Naive thymus-derived CD4-positive, alpha-beta T cell (primary cell): ENCODE measurements at regions of chr9 and their contacts with region 1.

Region 1: DNA sequence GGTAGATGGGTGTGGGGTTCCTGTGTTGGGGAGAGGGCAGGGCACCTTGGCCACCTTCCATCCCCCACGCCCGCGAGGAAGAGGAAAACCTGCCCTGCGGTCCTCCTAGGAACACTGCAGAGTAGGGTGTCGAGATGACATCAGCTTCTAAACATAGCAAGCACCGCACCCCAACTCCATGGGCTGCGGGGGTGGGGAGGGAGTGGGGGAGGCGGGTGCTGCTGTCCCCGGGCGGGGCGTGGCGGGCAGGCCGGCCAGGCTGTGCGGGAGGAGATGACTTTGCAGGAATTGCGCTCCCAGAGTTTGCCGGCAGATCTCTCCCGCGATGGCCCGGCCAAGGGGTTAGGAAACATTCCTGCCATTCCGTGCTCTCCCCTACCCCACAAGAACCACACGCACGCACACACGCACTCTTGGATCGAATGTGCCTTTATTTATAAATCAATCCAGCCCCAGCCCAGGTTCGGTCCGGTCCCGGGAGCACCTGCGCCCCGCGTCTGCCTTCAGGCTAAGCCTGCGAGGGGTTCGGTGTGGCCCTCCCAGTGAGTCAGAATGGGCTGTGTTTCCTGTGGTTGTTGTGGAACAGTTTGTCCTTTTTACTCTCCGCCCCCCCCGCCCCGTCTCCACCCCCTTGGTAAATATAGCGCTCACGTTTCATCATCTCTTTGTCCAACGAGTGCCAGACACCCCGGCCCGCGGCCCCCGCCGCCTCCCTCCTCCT is 5.2 kb upstream of the KLF9 start:
- DNase-seq: peak; percentile 69 to 92 (median 83)
- ATAC-seq: peak; percentile 69
- H3K4me3 ChIP-seq: peak overlapping the region; percentile 69
- H3K4me3 Mint-ChIP-seq: peak overlapping the region; percentile 87 to 99 (median 95)
- H3K27ac ChIP-seq: peak overlapping the region; percentile 92
- H3K27ac Mint-ChIP-seq: peak overlapping the region; percentile 75 to 100 (median 99)
- H3K4me1 ChIP-seq: peaks cover 38 to 43% of the 10 kb centered on the region in 2 donors
- H3K4me1 Mint-ChIP-seq: peaks cover 22 to 66% (median 42%) of the 10 kb centered on the region in 7 donors
- H3K27me3 ChIP-seq: no peaks in the 10 kb centered on the region
- H3K27me3 Mint-ChIP-seq: peaks cover 0 to 2% (median 0%) of the 10 kb centered on the region in 5 donors

Region 2: GRCh38 chr9:70398145-70398556 is 21.6 kb before region 1 on chr9:
- CTCF ChIA-PET with region 1: interaction called, 3 read pairs
- POLR2A ChIA-PET with region 1: interaction called, 138 read pairs
- intact Hi-C with region 1: loop called in 1 of 2 experiments (anchors 1 kb)
- DNase-seq: peak in 6 of 9 donors; percentile 45 to 69 (median 56)
- ATAC-seq: peak; percentile 95
- H3K4me3 ChIP-seq: peak overlapping the region; percentile 3
- H3K4me3 Mint-ChIP-seq: peak overlapping the region; percentile 13 to 85 (median 74)
- H3K27ac ChIP-seq: peak overlapping the region; percentile 50
- H3K27ac Mint-ChIP-seq: peak overlapping the region; percentile 49 to 91 (median 84)
- H3K4me1 ChIP-seq: peaks cover 40 to 68% of the 10 kb centered on the region in 2 donors
- H3K4me1 Mint-ChIP-seq: peaks cover 50 to 88% (median 78%) of the 10 kb centered on the region in 7 donors
- H3K27me3 ChIP-seq: no peaks in the 10 kb centered on the region
- H3K27me3 Mint-ChIP-seq: no peaks in the 10 kb centered on the region

Region 3: GRCh38 chr9:70470050-70471015 is 50.6 kb after region 1 on chr9:
- CTCF ChIA-PET with region 1: interaction called, 3 read pairs
- POLR2A ChIA-PET with region 1: interaction called, 11 read pairs
- intact Hi-C with region 1: no loop called
- DNase-seq: no peak
- ATAC-seq: no peak
- H3K4me3 ChIP-seq: no peak overlapping the region
- H3K4me3 Mint-ChIP-seq: peak overlapping the region; percentile 15 to 67 (median 44)
- H3K27ac ChIP-seq: no peak overlapping the region
- H3K27ac Mint-ChIP-seq: peak overlapping the region in 8 of 9 donors; percentile 18 to 70 (median 54)
- H3K4me1 ChIP-seq: peaks cover 0 to 15% of the 10 kb centered on the region in 2 donors
- H3K4me1 Mint-ChIP-seq: peaks cover 12 to 56% (median 49%) of the 10 kb centered on the region in 7 donors
- H3K27me3 ChIP-seq: no peaks in the 10 kb centered on the region
- H3K27me3 Mint-ChIP-seq: no peaks in the 10 kb centered on the region

Region 4: DNA sequence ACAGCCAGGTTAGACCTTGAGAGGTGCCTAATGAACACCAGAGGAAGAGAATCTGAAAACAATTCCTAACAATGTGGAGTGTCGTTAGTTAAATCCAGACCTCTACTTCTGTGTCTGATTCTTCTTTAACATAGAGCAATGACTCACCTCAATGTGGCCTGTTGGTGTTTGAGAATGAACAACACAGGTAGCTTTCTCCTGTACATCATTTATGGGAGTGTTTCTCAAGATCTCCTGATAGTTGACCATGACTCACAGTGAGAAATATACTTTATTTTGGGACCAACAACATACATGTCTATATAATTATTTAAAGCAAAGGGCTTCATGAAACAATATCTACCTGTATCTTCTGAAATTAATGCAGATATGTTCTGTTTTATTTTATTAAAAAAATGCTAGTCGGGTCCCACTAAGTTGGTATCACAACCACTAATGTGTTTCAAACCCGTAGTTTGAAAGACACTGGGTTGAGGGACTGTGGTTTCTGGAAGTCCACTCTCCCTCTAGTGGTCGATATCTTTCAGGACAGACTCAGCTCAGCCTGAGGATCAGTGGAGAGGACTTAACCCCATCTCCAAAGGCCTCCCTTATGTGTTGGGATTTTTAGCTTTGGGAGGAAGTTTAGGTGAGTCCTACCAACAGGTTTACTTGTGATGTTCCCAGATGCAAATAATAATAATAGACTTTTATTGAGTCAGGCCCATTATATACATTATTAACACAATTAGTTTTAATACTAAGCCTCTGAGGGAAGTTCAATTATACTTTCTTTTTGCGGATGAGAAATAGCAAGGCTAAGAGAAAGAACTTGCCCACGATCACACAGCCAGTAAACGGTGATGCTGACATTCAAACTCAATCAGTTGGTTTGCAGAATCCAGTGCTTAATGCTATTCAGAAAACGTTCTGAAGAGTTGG is 64.8 kb after region 1 on chr9:
- CTCF ChIA-PET with region 1: interaction called, 6 read pairs
- POLR2A ChIA-PET with region 1: interaction called, 7 read pairs
- intact Hi-C with region 1: loop called (anchors 1 to 2 kb)
- DNase-seq: peak in 6 of 9 donors; percentile 13 to 38 (median 32)
- ATAC-seq: peak; percentile 85
- H3K4me3 ChIP-seq: no peak overlapping the region
- H3K4me3 Mint-ChIP-seq: no peak overlapping the region
- H3K27ac ChIP-seq: no peak overlapping the region
- H3K27ac Mint-ChIP-seq: peak overlapping the region in 1 of 9 donors; percentile 36
- H3K4me1 ChIP-seq: no peaks in the 10 kb centered on the region
- H3K4me1 Mint-ChIP-seq: peaks cover 4 to 26% (median 13%) of the 10 kb centered on the region in 7 donors
- H3K27me3 ChIP-seq: no peaks in the 10 kb centered on the region
- H3K27me3 Mint-ChIP-seq: peaks cover 0 to 10% (median 0%) of the 10 kb centered on the region in 5 donors

Region 5: GRCh38 chr9:70504834-70505233 is 85.1 kb after region 1 on chr9:
- CTCF ChIA-PET with region 1: no interaction called
- POLR2A ChIA-PET with region 1: no interaction called
- intact Hi-C with region 1: no loop called
- DNase-seq: no peak
- ATAC-seq: no peak
- H3K4me3 ChIP-seq: no peak overlapping the region
- H3K4me3 Mint-ChIP-seq: no peak overlapping the region
- H3K27ac ChIP-seq: no peak overlapping the region
- H3K27ac Mint-ChIP-seq: peak overlapping the region in 1 of 9 donors; percentile 22
- H3K4me1 ChIP-seq: no peaks in the 10 kb centered on the region
- H3K4me1 Mint-ChIP-seq: peaks cover 0 to 15% (median 9%) of the 10 kb centered on the region in 7 donors
- H3K27me3 ChIP-seq: no peaks in the 10 kb centered on the region
- H3K27me3 Mint-ChIP-seq: no peaks in the 10 kb centered on the region

Region 6: DNA sequence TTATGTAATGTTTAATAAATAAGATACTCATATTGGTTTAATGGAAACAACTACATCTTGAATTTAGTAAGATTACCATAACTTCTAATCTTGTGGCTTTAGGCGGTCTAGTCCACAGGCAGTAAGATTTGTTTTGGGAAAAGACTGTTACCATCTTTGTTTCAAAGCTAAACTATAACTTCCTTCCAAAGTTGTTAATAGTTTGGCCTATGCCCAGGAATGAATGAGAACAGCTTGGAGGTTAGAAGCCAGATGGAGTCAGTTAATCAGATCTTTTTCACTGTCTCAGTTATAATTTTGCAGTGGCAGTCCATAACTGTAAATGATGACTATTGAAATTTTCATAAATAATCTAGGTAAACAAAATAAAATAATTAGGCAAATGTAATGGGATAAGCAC is 236.6 kb after region 1 on chr9:
- CTCF ChIA-PET with region 1: no interaction called
- POLR2A ChIA-PET with region 1: no interaction called
- intact Hi-C with region 1: no loop called
- DNase-seq: no peak
- ATAC-seq: no peak
- H3K4me3 ChIP-seq: no peak overlapping the region
- H3K4me3 Mint-ChIP-seq: no peak overlapping the region
- H3K27ac ChIP-seq: no peak overlapping the region
- H3K27ac Mint-ChIP-seq: no peak overlapping the region
- H3K4me1 ChIP-seq: no peaks in the 10 kb centered on the region
- H3K4me1 Mint-ChIP-seq: no peaks in the 10 kb centered on the region
- H3K27me3 ChIP-seq: no peaks in the 10 kb centered on the region
- H3K27me3 Mint-ChIP-seq: peaks cover 6 to 17% (median 13%) of the 10 kb centered on the region in 5 donors

Region 7: DNA sequence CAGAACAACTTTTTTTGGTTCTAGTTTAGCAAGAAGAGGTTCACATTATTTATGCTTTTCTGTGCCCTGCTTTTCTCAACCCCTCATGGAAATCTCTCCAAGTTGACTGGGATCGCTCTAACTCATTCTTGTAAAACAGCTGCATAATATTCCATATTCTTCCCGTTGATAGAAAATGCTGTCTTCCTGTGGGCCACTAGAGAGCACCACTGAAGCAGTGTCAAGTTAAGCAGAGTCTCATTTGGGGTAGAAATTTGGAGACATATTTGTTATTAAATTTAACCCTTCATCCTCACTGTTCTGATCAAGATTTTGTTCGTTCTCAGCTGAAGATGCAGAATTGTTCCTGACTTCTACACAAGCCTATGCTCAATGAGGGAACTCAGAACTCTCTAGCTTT is 1208.5 kb after region 1 on chr9:
- CTCF ChIA-PET with region 1: no interaction called
- POLR2A ChIA-PET with region 1: no interaction called
- intact Hi-C with region 1: no loop called
- DNase-seq: peak in 1 of 9 donors; percentile 29
- ATAC-seq: peak; percentile 57
- H3K4me3 ChIP-seq: no peak overlapping the region
- H3K4me3 Mint-ChIP-seq: no peak overlapping the region
- H3K27ac ChIP-seq: no peak overlapping the region
- H3K27ac Mint-ChIP-seq: no peak overlapping the region
- H3K4me1 ChIP-seq: no peaks in the 10 kb centered on the region
- H3K4me1 Mint-ChIP-seq: peaks cover 0 to 33% (median 0%) of the 10 kb centered on the region in 7 donors
- H3K27me3 ChIP-seq: no peaks in the 10 kb centered on the region
- H3K27me3 Mint-ChIP-seq: peaks cover 0 to 27% (median 0%) of the 10 kb centered on the region in 5 donors